ENCODE measurements at regions of chr3 and their contacts with region 1.

Region 1: DNA sequence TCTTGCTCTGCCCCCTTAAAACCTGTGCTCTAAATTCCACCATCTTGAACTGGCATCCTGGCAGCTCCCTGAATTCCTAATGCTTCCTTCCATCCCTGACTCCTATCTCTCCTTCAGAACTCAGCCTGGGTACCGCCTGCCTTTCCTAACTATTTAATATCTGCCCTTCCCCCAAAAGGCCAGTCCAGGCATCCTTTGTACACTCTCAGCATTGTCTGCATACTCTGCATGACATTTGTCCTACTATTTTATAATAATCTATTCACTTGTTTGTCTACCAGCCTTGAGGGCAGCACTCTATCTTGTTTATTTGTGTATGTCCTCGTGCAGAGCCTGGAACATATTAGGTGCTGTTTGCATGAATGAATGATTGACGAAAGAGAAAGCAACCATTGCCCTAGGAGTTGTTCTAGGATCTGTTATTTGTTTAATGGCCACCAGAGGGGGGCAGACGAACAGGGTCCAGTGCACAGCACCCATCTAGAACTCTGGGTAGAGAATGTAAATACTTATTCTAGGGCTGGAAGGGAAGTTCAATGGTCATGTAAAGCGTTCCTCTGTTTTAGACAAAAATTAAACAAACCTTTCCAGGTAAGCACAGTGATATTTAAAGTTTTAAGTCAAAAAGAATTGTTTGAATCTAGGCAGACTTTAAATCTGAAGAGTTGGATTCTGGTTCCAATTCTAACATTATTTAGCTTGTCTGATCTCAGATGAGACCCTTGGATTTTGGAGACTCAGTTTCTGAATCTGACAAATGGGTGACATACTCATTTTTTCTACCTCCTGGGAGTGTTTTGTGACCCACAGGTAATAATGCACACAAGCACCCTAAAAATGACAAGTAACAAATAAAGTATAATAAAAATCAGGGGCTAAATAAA is 125.8 kb upstream of the GALNT15 start:
- DNase-seq: peak in 11 of 14 experiments; percentile 5 to 70 (median 17)
- ATAC-seq: peak; percentile 87
- H3K4me3 ChIP-seq: no peak overlapping the region
- H3K4me3 Mint-ChIP-seq: no peak overlapping the region
- H3K27ac ChIP-seq: no peak overlapping the region
- H3K27ac Mint-ChIP-seq: no peak overlapping the region
- H3K4me1 ChIP-seq: no peaks in the 10 kb centered on the region
- H3K4me1 Mint-ChIP-seq: peaks cover 6% of the 10 kb centered on the region
- H3K27me3 ChIP-seq: no peaks in the 10 kb centered on the region
- H3K27me3 Mint-ChIP-seq: no peaks in the 10 kb centered on the region
- CTCF ChIP-seq: peak; percentile 82

Region 2: GRCh38 chr3:16177962-16178627 is 129.4 kb after region 1 on chr3:
- CTCF ChIA-PET with region 1: no interaction called
- POLR2A ChIA-PET with region 1: no interaction called
- intact Hi-C with region 1: loop called in 1 of 2 experiments (anchors 5 kb)
- DNase-seq: peak; percentile 24 to 75 (median 48)
- ATAC-seq: peak; percentile 68
- H3K4me3 ChIP-seq: no peak overlapping the region
- H3K4me3 Mint-ChIP-seq: no peak overlapping the region
- H3K27ac ChIP-seq: no peak overlapping the region
- H3K27ac Mint-ChIP-seq: no peak overlapping the region
- H3K4me1 ChIP-seq: peaks cover 7% of the 10 kb centered on the region
- H3K4me1 Mint-ChIP-seq: no peaks in the 10 kb centered on the region
- H3K27me3 ChIP-seq: peaks cover 0 to 2% of the 10 kb centered on the region in 2 experiments
- H3K27me3 Mint-ChIP-seq: peaks cover 22% of the 10 kb centered on the region
- CTCF ChIP-seq: peak; percentile 80

Region 3: DNA sequence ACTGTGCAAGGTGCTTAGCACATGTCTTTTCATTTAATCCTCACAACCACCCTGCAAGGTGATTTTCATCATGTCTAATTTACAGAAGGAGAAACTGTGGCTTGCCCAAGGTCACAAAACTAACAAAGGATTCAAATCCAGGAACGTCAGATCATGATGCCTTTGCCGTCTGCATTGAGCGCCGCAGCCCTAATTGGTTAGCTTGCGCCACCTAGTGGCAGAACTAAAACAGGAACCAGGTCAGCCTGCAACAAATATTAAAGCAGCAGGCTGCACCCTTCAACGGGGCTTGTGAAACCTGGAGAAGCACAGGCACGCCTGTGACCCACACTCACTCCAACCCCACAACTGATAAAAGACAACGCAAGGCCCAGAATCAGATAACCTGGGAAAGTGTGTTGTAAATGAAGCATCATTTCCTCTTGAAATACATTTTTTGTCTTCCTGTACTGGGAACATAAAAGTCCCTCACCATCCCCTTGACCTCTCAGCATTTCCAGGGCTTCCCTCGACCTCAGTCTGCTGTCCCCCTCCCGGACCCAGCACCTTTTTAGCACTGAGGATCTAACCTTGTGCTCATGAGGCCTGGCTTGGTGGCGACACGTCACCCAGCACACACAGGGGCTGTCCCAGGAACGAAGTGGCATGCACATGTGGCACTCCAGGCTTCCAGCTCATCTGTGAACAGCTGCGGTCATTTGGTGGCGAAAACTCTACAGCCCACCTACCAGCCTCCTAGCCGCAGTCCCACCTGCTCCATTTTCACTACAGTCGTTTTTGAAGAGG is 198.8 kb after region 1 on chr3:
- CTCF ChIA-PET with region 1: no interaction called
- POLR2A ChIA-PET with region 1: no interaction called
- intact Hi-C with region 1: loop called in 1 of 2 experiments (anchors 1 kb)
- DNase-seq: peak; percentile 58 to 89 (median 70)
- ATAC-seq: peak; percentile 94
- H3K4me3 ChIP-seq: no peak overlapping the region
- H3K4me3 Mint-ChIP-seq: no peak overlapping the region
- H3K27ac ChIP-seq: no peak overlapping the region
- H3K27ac Mint-ChIP-seq: no peak overlapping the region
- H3K4me1 ChIP-seq: peaks cover 9% of the 10 kb centered on the region
- H3K4me1 Mint-ChIP-seq: peaks cover 9% of the 10 kb centered on the region
- H3K27me3 ChIP-seq: no peaks in the 10 kb centered on the region
- H3K27me3 Mint-ChIP-seq: no peaks in the 10 kb centered on the region
- CTCF ChIP-seq: peak; percentile 91

Region 4: GRCh38 chr3:16550676-16551341 is 502.1 kb after region 1 on chr3:
- CTCF ChIA-PET with region 1: no interaction called
- POLR2A ChIA-PET with region 1: no interaction called
- intact Hi-C with region 1: loop called (anchors 1 kb)
- DNase-seq: peak; percentile 43 to 90 (median 62)
- ATAC-seq: peak; percentile 100
- H3K4me3 ChIP-seq: no peak overlapping the region
- H3K4me3 Mint-ChIP-seq: no peak overlapping the region
- H3K27ac ChIP-seq: no peak overlapping the region
- H3K27ac Mint-ChIP-seq: peak overlapping the region; percentile 16
- H3K4me1 ChIP-seq: peaks cover 5% of the 10 kb centered on the region
- H3K4me1 Mint-ChIP-seq: no peaks in the 10 kb centered on the region
- H3K27me3 ChIP-seq: no peaks in the 10 kb centered on the region
- H3K27me3 Mint-ChIP-seq: peaks cover 4% of the 10 kb centered on the region
- CTCF ChIP-seq: peak; percentile 91

Measured in CD4-positive, alpha-beta T cell (primary cell).